Activated CD8-positive, alpha-beta T cell treated with anti-CD3 and anti-CD28 coated beads, Interleukin-2, amount 10 ng/mL, durations not matched to agents 7 days and 5 days (primary cell): ENCODE measurements at regions of chr9 and their contacts with region 1.

Region 1: DNA sequence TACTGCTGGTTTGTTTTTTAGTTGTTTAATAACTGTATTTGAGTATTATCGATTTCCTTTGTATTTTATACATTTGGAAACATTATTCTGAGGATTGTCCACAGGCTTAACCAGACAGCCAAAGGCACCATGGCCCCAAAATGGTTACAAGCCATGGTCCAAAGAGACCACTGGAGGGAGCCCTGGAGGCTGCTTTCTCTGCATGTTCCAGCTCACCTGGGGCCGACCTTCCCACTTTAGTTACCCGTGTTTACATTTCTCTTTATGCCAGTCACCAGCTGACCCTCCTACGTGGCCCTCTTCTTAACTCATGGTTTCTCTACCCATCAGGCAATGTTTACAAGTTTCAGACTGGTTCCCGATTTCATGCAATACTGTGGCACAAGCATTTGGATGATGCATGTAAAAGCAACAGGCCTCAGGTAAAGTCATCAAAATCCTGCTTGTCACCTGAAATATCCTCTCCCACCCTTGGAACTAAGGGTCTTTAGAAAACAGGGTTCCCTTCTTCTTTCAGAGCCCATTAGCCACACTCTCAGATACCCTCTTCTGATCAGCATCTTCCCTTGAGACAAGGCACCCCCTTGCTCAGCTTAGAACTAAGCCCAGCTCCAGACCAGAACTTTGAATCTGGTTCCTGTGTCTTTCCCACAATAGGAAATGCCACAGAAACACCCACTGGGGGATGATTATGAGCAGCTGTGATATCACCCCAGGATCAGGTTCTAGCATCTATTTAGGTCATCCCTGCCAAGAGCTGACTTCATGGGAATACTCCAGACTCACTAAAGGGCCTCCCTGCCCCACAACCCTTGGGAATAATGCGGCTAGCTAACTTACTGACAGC is 49.9 kb upstream of the GARNL3 start:
- DNase-seq: peak; percentile 76
- ATAC-seq: peak; percentile 75
- H3K4me3 Mint-ChIP-seq: no peak overlapping the region
- H3K27ac Mint-ChIP-seq: no peak overlapping the region
- H3K4me1 Mint-ChIP-seq: no peaks in the 10 kb centered on the region
- H3K27me3 Mint-ChIP-seq: peaks cover 4% of the 10 kb centered on the region

Region 2: DNA sequence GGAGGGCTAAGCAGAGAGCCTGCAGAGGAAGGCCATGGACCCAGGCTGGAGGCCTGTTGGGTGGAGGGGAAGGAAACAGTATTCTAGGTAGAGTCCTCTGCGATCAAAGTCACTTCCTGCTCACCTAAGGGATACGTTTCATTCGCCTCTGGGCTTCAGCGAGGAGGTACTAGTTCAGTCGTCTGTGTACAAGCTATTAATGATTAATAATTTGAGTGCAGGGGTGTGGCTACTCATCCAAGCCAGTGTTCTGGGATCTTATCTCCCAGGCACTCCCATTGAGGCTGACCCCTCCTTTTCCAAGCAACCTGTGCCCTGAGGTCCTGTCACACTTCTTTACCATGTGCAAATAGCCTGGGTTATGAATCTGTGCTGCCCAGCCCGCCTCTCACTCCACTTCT is 274.8 kb before region 1 on chr9:
- CTCF ChIA-PET with region 1: interaction called, 10 read pairs
- POLR2A ChIA-PET with region 1: no interaction called
- DNase-seq: no peak
- ATAC-seq: no peak
- H3K4me3 Mint-ChIP-seq: no peak overlapping the region
- H3K27ac Mint-ChIP-seq: no peak overlapping the region
- H3K4me1 Mint-ChIP-seq: peaks cover 12% of the 10 kb centered on the region
- H3K27me3 Mint-ChIP-seq: peaks cover 26% of the 10 kb centered on the region

Region 3: DNA sequence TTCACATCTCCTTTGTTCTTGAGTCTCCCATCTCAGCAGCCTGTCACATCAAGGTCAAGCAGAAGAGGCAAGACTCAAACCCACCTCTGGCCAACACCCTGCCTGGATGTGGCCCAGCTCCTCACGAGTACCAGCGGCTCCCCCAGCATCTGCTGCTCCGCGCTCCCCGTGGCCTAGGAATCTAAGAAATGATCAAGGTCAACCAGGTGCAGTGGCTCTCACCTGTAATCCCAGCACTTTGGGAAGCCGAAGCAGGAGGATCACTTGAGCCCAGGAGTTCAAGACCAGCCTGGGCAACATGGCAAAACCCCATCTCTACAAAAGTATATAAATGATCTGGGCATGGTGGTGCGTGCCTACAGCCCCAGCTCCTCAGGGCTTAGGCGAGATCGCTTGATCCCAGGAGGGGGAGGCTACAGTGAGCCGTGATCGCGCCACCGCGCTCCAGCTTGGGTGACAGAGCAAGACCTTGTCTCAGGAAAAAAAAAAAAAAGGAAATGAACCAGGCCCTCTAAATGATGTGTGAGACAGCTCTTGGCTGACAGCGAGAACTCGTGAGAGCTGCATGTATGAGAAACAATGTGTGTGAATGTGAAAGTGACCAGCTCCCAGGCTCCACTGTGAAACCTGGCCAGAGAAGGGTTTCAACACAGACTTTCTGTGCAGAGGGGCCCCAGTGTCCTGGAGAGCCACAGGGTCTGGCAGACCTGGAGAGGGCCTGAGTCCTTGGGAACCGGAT is 30.6 kb before region 1 on chr9:
- CTCF ChIA-PET with region 1: no interaction called
- POLR2A ChIA-PET with region 1: no interaction called
- DNase-seq: no peak
- ATAC-seq: no peak
- H3K4me3 Mint-ChIP-seq: no peak overlapping the region
- H3K27ac Mint-ChIP-seq: no peak overlapping the region
- H3K4me1 Mint-ChIP-seq: peaks cover 2% of the 10 kb centered on the region
- H3K27me3 Mint-ChIP-seq: no peaks in the 10 kb centered on the region

Region 4: DNA sequence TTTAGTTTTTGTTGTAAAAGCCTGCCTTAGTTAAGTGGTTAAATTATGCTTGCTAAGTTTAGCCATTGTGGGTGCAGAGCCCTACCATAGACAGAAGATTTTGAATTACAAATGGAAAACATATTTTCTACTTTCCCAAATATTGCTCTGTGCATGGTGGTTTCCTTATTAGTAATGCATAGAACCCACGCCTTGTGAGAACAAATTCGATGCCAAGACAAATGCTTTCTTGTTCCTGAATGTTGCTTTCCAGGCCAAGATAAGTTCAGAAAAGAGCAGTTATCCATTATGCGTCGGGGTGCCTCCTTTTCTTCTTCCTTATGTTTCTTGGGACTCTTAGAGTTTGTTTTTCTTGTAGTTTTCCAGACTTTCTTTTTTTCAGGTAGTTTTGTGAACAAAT is 18.9 kb after region 1 on chr9:
- CTCF ChIA-PET with region 1: interaction called, 11 read pairs
- POLR2A ChIA-PET with region 1: no interaction called
- DNase-seq: no peak
- ATAC-seq: no peak
- H3K4me3 Mint-ChIP-seq: no peak overlapping the region
- H3K27ac Mint-ChIP-seq: no peak overlapping the region
- H3K4me1 Mint-ChIP-seq: no peaks in the 10 kb centered on the region
- H3K27me3 Mint-ChIP-seq: peaks cover 18% of the 10 kb centered on the region

Region 5: DNA sequence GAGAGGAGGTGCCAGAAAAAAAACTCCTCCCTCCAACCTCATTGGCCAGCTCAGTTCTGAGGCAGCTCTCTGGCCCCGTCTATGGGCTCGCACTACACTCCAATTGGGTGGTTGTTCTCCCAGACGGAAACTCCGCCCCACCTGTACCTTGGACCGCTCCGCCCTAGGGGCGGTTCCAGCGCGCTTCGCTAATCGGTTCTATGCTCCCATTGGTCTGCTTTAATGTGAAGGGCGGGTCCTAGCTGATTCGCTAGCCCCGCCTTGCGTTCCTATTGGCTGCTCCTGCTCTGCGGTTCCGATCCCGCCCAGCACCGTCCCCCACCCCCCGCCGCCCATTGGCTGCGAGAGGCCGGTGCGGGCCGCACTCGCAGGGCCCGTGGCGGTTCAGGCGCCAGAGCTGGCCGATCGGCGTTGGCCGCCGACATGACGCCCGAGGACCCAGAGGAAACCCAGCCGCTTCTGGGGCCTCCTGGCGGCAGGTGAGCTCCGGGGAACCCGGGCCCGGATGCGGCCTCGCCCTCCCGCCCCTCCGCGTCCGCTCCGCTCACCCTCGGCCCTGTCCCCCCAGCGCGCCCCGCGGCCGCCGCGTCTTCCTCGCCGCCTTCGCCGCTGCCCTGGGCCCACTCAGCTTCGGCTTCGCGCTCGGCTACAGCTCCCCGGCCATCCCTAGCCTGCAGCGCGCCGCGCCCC is 182.3 kb after region 1 on chr9 and contains the start of gene SLC2A8:
- CTCF ChIA-PET with region 1: interaction called, 12 read pairs
- POLR2A ChIA-PET with region 1: no interaction called
- DNase-seq: peak; percentile 98
- ATAC-seq: peak; percentile 96
- H3K4me3 Mint-ChIP-seq: peak within 1 kb of the TSS; percentile 69
- H3K27ac Mint-ChIP-seq: peak within 1 kb of the TSS; percentile 53
- H3K4me1 Mint-ChIP-seq: peaks cover 18% of the 10 kb centered on the region
- H3K27me3 Mint-ChIP-seq: peaks cover 51% of the 10 kb centered on the region
- total RNA-seq, gene SLC2A8: 5.6 to 7.2 TPM

Region 6: DNA sequence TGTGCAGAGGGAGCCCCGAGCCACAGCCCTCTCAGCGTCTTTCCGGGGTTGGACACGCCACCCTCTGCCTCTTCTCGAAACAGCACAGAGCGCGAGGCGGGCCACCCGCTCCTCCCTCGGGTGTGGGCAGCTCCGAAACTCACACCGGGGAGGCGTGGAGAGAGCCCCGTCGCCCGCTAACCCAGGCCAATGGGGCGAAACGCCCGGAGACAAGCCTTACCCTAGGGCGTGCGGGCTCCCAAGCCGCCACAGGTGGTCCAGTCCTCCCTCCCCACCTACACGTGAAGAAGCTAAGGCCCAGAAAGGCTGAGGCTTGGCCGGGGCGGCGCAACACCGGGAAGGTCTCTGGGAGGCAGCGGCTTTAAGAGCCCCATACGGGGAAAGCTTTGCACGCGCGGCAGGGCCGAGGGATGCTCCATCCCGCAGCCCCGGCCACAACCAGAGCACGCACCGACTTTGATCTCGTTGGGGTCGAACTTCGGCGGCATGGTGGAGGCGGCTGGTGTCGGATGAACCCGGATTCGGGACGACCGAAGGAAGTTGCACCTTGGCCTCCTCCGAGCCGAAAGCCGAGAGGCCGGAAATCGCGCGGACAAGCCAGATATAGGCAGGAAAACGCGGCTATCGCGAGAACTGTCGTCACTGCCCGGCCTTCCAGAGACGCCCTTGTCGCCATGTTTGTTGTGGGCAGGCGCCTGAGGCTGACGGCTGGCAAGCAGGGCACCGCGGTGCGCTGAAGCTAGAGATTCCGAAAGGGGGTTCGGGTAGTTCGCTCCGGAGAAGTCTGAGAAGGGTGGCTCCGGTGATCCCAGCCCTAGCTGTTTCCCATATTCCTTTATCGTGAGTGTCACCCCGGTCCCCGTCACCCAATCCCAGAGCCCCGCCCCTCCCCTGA is 236.4 kb after region 1 on chr9 and contains the starts of genes LRSAM1 and RPL12:
- CTCF ChIA-PET with region 1: interaction called, 12 read pairs
- POLR2A ChIA-PET with region 1: interaction called, 4 read pairs
- DNase-seq: peak; percentile 98
- ATAC-seq: peak; percentile 66
- H3K4me3 Mint-ChIP-seq: peak within 1 kb of the TSS; percentile 95
- H3K27ac Mint-ChIP-seq: peak within 1 kb of the TSS; percentile 97
- H3K4me1 Mint-ChIP-seq: peaks cover 54% of the 10 kb centered on the region
- H3K27me3 Mint-ChIP-seq: no peaks in the 10 kb centered on the region
- total RNA-seq, gene LRSAM1: 17.8 to 18.0 TPM
- total RNA-seq, gene RPL12: 1,248 to 1,328 TPM